ENCODE measurements at regions of chr20 and their contacts with region 1.

Region 1: DNA sequence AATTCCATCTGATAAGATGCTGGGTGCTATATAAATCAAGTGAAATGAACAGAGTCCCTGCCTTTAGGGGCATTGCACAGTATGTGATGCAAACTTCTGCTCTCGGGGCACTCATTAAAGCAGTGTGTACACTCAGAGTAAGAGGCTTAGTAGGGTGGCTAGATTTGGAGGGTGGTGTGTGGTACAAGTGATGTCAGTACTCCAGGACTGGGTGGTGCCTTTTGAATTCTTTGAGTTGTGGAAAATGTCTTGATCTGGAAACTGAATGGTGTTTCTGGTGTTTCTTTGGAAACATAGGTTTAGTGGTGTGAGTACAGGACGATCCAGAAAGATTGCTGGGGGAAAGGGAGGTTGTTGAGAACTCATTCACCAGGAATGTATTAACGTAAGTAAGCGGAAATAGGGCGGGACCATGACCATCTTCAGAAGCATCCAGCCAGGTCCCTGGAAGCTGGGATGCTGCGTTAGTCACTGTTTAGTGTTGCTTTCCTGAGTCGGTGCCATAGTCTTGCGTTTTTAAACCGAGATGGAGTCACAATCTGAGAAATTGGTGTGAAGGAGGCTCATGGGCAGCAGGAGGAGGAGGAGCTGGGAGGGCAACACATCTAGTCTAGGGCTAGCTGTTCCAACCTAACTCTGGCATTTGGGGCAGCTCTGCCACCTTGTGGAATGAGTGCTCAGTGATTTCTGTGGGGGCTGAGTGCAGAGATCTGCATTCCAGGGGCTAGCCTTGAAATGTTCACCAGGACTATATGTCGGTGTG is 70.3 kb downstream of the SCAND1 start:
- DNase-seq: peak; percentile 82
- H3K4me3 Mint-ChIP-seq: no peak overlapping the region
- H3K27ac Mint-ChIP-seq: no peak overlapping the region
- H3K4me1 Mint-ChIP-seq: peaks cover 10% of the 10 kb centered on the region
- H3K27me3 Mint-ChIP-seq: no peaks in the 10 kb centered on the region

Region 2: DNA sequence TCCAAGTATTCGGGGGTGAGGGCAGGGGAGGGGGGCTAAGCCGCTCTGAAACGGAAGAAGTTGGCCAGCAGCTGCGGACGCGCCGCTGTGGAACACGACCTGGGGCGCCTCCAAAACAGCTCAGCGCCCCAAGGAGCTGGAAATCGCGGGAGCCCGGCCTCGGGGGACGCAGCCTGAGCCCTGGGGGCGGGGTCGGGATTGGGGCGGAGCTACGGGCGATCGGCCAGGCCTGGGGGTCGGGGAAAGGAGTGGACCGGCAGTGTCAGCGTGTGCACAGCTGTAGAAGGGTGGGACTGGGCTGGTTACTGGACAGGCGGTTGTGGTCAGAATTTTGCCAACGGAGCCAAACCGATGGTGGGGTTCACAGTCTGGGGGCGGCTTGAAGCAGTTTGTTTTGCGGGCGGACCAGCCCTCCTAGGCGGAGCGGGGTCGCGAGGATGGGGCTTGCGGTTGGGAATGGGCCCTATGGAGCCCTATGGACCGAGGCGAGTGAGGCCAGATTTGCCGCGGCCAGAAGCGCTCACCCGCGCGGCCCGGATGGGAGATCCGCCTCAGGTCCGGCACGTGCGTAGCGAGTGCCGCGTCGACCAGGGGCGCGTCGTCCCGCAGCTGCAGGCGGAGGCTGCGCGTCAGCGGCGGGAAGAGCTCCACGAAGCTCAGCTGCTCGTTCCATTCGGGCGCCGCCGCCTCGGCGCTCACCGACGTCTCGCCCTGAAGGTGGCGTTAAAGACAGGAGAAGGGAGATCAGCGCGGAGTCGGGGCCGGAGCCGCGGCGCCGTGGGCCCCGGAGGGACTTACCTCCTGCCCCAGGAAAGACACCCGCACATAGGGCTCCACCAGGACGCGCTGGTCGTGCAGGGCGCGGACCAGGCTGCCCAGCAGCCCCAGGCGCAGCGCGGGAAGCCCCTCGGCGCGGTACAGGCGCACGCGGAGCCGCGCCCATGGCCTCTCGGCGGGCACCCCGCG is 282.7 kb before region 1 on chr20:
- CTCF ChIA-PET with region 1: no interaction called
- intact Hi-C with region 1: loop called (anchors 1 kb)
- DNase-seq: peak; percentile 91
- H3K4me3 Mint-ChIP-seq: peak overlapping the region; percentile 64
- H3K27ac Mint-ChIP-seq: no peak overlapping the region
- H3K4me1 Mint-ChIP-seq: peaks cover 7% of the 10 kb centered on the region
- H3K27me3 Mint-ChIP-seq: peaks cover 13% of the 10 kb centered on the region

Region 3: DNA sequence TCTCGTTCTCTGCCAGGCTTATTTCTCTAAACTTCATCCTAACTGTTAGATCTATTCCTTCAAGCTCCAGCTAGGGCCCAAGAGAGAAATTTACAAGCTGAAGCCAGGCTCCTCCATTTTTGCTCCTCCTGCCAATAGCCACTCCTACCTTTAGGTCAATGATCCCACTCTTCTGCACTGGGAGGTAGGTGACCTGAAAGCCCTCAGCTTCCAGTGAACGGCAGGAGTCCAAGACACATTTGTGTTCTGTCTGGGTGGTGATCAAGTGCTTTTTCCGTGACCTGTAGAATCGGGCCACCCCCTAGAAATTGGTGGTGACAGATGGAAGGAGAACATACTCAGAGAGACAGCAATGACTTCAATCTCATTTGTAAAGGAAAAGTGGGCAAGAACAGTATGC is 193.7 kb before region 1 on chr20:
- CTCF ChIA-PET with region 1: interaction called, 3 read pairs
- intact Hi-C with region 1: loop called (anchors 1 kb)
- DNase-seq: no peak
- H3K4me3 Mint-ChIP-seq: no peak overlapping the region
- H3K27ac Mint-ChIP-seq: no peak overlapping the region
- H3K4me1 Mint-ChIP-seq: no peaks in the 10 kb centered on the region
- H3K27me3 Mint-ChIP-seq: no peaks in the 10 kb centered on the region